ENCODE measurements at regions of chr10 and their contacts with region 1.

Region 1: DNA sequence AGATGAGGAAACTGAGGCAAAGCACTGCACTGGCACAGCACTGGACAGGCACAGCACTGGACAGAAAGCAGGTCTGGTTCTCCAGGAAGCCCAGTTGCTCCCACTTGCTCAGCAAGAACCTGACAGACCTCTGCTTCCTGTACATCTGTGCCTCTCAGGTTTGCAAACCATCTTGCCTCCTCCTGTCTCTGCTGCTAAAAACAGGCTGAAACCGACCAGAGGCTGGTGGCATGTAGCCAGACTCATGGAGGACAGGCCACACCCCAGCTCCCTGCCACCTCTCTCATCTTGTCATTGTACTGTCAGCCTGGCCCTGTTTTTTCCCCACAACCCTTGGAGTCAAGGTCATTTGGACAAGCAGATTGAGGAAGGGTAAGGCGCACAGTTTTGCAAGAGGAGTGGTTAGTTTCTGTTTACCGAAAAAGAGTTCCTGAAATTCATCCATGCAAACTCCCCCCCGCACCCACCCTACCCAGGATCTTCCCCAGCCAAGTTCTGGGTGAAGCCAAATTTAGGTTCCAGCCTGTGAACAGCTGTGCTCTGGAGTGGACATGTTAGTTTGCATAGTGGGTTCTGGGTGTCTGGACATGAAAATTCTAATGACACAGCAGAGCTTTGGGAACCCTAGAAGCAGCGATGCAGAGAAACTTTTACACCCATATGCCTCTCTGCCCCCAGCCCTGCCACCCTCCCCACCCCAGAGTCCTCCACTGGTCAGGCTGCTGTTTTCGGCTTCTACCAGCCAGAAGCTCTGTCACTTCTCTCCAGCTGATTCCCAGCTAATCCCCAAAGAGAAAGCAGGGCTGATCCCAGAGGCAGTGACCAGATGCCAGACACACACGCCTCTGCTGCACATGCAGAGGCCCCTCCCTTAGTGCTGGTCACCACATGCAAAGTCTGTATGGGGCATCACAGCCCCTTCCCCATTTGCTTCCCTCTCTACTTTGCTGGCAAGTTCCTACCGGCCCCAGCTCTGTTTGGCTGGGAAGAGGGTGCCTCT is 8.5 kb upstream of the C10orf105 start:
- DNase-seq: peak; percentile 87
- H3K4me3 Mint-ChIP-seq: peak overlapping the region; percentile 58
- H3K27ac Mint-ChIP-seq: peak overlapping the region; percentile 99
- H3K4me1 Mint-ChIP-seq: peaks cover 95% of the 10 kb centered on the region
- H3K27me3 Mint-ChIP-seq: no peaks in the 10 kb centered on the region

Region 2: DNA sequence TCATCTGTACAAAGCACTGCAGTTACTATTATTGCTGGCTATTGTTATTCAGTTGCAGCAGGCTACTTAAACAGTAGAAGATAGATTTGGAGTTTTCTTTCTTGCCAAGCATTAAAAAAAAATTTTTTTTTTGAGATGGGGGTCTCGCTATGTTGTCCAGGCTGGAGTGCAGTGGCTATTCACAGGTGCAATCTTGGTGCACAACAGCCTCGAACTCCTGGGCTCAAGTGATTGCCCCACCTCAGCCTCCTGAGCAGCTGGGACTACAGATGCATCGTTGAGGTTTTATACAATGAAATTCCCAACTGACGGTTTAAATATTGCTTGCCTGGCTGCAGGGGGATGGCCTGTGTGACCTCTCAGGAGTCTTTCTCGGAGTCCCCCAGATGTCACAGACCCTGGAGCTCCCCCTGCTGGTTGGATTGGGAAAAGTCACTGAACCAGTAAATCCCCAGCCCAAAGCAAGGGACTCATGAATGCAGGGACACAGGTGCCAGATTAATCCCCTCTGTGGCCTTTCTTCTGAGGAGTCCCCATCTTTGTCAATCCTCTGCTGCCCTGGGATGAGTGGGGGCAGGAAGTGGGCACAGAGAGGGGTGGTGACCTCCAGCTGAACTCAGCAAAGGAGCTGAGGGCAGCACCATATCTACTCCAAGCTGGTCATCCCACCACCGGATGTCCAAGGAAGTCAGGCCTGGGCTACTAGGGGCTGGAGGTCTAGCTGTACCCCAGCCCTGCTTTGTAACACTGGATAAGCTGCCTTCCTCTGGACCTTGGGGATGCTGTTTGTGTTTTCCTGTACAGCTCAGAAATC is 158.1 kb before region 1 on chr10:
- CTCF ChIA-PET with region 1: no interaction called
- POLR2A ChIA-PET with region 1: no interaction called
- intact Hi-C with region 1: no loop called
- DNase-seq: peak; percentile 83
- H3K4me3 Mint-ChIP-seq: no peak overlapping the region
- H3K27ac Mint-ChIP-seq: no peak overlapping the region
- H3K4me1 Mint-ChIP-seq: no peaks in the 10 kb centered on the region
- H3K27me3 Mint-ChIP-seq: no peaks in the 10 kb centered on the region

Region 3: DNA sequence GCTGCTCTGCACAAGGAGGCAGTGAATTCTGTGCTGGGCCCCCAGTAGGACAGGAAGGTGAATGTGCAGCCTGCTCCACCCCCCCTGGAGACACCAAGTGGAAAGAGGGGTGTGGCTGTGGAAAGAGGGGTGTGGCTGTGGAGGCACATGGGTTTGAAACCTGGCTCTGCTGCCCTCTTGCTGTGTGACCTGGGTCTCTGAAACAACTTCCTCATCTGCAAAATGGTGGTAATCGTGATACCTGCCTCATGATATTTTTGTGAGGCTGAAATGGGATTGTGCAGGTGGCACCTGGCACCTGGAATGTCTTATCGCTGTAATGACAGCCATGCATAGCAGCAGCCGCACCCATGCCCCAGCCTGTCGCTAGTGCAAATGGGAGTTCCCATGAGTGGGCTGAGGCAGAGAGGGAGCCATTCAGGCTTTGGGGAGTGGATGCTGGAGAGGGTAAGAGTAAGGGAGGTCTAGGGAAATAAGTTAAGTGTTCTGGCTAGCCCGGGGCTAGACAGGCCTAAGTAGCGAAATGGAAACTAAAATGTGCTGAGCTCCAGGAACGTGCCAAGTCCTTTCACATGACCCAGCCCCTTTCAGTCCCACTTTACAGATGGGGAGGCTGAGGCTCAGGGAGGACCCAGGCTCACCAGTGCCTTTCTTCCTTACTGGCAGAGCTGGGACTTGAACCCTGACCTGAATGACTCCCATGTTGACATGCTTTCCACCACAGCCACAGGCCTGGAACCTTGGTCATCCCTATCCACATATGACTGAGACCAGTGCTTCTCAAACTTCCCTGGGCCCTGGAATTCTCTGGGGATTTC is 43.5 kb before region 1 on chr10:
- CTCF ChIA-PET with region 1: no interaction called
- POLR2A ChIA-PET with region 1: no interaction called
- intact Hi-C with region 1: no loop called
- DNase-seq: peak; percentile 42
- H3K4me3 Mint-ChIP-seq: no peak overlapping the region
- H3K27ac Mint-ChIP-seq: no peak overlapping the region
- H3K4me1 Mint-ChIP-seq: no peaks in the 10 kb centered on the region
- H3K27me3 Mint-ChIP-seq: no peaks in the 10 kb centered on the region

Region 4: GRCh38 chr10:71713135-71714030 is 14.7 kb before region 1 on chr10:
- CTCF ChIA-PET with region 1: interaction called, 55 read pairs
- POLR2A ChIA-PET with region 1: interaction called, 8 read pairs
- intact Hi-C with region 1: loop called (anchors 1 kb)
- DNase-seq: peak; percentile 63
- H3K4me3 Mint-ChIP-seq: peak overlapping the region; percentile 66
- H3K27ac Mint-ChIP-seq: peak overlapping the region; percentile 91
- H3K4me1 Mint-ChIP-seq: peaks cover 54% of the 10 kb centered on the region
- H3K27me3 Mint-ChIP-seq: no peaks in the 10 kb centered on the region

Region 5: GRCh38 chr10:71748671-71749191 is 20.7 kb after region 1 on chr10:
- CTCF ChIA-PET with region 1: interaction called, 15 read pairs
- POLR2A ChIA-PET with region 1: interaction called, 33 read pairs
- intact Hi-C with region 1: loop called (anchors 1 kb)
- DNase-seq: peak; percentile 91
- H3K4me3 Mint-ChIP-seq: peak overlapping the region; percentile 73
- H3K27ac Mint-ChIP-seq: peak overlapping the region; percentile 98
- H3K4me1 Mint-ChIP-seq: peaks cover 97% of the 10 kb centered on the region
- H3K27me3 Mint-ChIP-seq: no peaks in the 10 kb centered on the region

Region 6: GRCh38 chr10:71766702-71767419 is 38.8 kb after region 1 on chr10:
- CTCF ChIA-PET with region 1: interaction called, 118 read pairs
- POLR2A ChIA-PET with region 1: interaction called, 51 read pairs
- intact Hi-C with region 1: loop called (anchors 1 kb)
- DNase-seq: peak; percentile 65
- H3K4me3 Mint-ChIP-seq: peak overlapping the region; percentile 38
- H3K27ac Mint-ChIP-seq: peak overlapping the region; percentile 96
- H3K4me1 Mint-ChIP-seq: peaks cover 93% of the 10 kb centered on the region
- H3K27me3 Mint-ChIP-seq: no peaks in the 10 kb centered on the region

Region 7: GRCh38 chr10:71850637-71851464 is 122.8 kb after region 1 on chr10 and contains the start of gene PSAP:
- CTCF ChIA-PET with region 1: no interaction called
- POLR2A ChIA-PET with region 1: no interaction called
- intact Hi-C with region 1: loop called (anchors 5 kb)
- DNase-seq: peak; percentile 99
- H3K4me3 Mint-ChIP-seq: peak within 1 kb of the TSS; percentile 82
- H3K27ac Mint-ChIP-seq: peak within 1 kb of the TSS; percentile 76
- H3K4me1 Mint-ChIP-seq: peaks cover 41% of the 10 kb centered on the region
- H3K27me3 Mint-ChIP-seq: no peaks in the 10 kb centered on the region
- total RNA-seq, gene PSAP: 137 to 144 TPM

Region 8: GRCh38 chr10:72061491-72061890 is 333.5 kb after region 1 on chr10:
- CTCF ChIA-PET with region 1: no interaction called
- POLR2A ChIA-PET with region 1: no interaction called
- intact Hi-C with region 1: no loop called
- DNase-seq: no peak
- H3K4me3 Mint-ChIP-seq: no peak overlapping the region
- H3K27ac Mint-ChIP-seq: peak overlapping the region; percentile 55
- H3K4me1 Mint-ChIP-seq: peaks cover 26% of the 10 kb centered on the region
- H3K27me3 Mint-ChIP-seq: no peaks in the 10 kb centered on the region